ENCODE measurements at regions of chr14 and their contacts with region 1.

Region 1: GRCh38 chr14:51430633-51431032 is 190.6 kb downstream of the TMX1 start:
- DNase-seq: no peak
- H3K4me3 Mint-ChIP-seq: peak overlapping the region; percentile 29
- H3K27ac Mint-ChIP-seq: peak overlapping the region; percentile 75
- H3K4me1 Mint-ChIP-seq: peaks cover 22% of the 10 kb centered on the region
- H3K27me3 Mint-ChIP-seq: no peaks in the 10 kb centered on the region
- CTCF ChIP-seq: no peak

Region 2: DNA sequence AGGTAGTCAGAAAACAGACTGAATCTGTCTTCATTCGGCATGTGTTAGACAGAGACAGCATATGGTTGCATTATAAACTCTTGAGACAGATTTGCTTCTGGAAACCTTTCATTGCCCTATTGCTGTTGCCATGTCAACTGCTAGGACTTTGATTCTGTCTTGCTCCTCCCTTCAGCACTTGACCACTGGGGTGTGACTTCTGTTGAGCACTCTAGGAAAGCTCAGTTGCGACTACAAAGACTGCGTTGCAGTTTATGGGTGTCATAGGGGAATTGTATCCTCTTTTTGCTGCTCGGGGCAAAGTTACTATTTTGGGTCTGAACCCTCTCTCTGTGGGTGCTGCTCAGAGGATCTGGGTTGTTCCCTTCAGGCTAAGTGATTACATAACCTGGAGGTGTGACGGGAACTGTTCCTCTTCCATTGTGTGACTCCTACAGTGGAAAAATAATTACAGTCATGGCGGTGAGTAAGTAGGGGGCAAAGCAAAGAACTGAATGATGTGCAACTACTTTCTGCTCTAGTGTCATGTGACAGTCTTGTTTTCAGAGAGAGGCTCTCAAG is 291.4 kb before region 1 on chr14:
- CTCF ChIA-PET with region 1: no interaction called
- intact Hi-C with region 1: no loop called
- DNase-seq: peak; percentile 13
- H3K4me3 Mint-ChIP-seq: no peak overlapping the region
- H3K27ac Mint-ChIP-seq: no peak overlapping the region
- H3K4me1 Mint-ChIP-seq: no peaks in the 10 kb centered on the region
- H3K27me3 Mint-ChIP-seq: no peaks in the 10 kb centered on the region
- CTCF ChIP-seq: no peak

Region 3: DNA sequence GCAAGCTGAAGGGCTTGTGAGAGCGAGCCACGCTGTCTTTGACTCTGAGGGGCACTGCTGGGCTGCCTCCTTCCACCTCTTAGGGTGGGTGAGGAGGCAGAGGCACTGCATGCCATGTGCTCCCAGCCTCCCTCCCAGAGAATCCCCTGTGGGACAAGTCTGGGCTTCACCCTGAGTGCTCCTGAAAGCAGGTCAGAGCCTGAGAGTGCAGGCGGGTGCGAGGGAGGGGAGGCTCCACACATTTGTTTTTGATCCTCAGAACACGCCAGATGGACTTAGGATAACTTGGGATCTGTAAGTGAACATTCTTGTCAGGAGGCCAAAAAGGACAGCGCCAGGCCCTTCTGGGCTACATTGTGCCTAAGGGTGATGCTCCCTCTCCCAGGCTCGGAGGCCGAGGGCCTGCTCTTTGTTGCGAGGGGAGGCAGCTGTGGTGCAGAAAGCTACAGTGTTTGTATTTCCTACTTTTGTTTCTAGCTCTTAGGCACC is 35.2 kb before region 1 on chr14:
- CTCF ChIA-PET with region 1: no interaction called
- intact Hi-C with region 1: loop called (anchors 1 kb)
- DNase-seq: no peak
- H3K4me3 Mint-ChIP-seq: peak overlapping the region; percentile 33
- H3K27ac Mint-ChIP-seq: peak overlapping the region; percentile 95
- H3K4me1 Mint-ChIP-seq: peaks cover 48% of the 10 kb centered on the region
- H3K27me3 Mint-ChIP-seq: no peaks in the 10 kb centered on the region
- CTCF ChIP-seq: no peak

Region 4: GRCh38 chr14:51638071-51638944 is 207.7 kb after region 1 on chr14:
- CTCF ChIA-PET with region 1: no interaction called
- intact Hi-C with region 1: loop called (anchors 5 kb)
- DNase-seq: no peak
- H3K4me3 Mint-ChIP-seq: no peak overlapping the region
- H3K27ac Mint-ChIP-seq: no peak overlapping the region
- H3K4me1 Mint-ChIP-seq: peaks cover 8% of the 10 kb centered on the region
- H3K27me3 Mint-ChIP-seq: no peaks in the 10 kb centered on the region
- CTCF ChIP-seq: no peak

Region 5: DNA sequence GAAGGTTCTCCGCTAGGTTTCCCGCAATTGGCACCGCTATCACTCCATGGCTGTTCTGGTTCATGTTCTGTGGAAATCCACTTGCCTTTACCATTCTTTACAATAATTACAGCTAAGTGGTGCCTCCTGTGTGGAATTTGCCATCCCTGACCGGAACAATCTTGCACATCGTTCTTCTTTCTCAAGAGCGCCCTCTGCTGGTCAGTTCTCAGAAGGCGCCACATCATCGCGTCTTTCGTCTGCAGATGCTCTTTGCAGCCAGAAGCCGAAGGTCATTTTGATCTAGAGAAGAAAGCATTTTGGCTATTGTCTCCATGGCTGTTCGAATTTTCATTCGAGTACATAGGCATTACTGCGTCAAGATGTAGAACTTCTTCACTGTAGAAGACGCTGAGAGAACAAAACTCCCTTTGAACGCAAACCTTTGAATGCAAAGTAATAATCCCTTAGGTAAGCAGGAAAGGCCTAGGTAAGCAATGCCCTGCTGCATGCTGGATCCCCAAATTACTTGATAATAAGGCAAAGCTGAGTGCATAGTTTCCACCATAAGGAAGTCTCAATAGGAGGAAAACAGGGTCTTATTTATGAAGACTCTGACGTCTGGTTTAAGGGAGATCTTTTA is 548.6 kb after region 1 on chr14:
- CTCF ChIA-PET with region 1: no interaction called
- intact Hi-C with region 1: no loop called
- DNase-seq: peak; percentile 80
- H3K4me3 Mint-ChIP-seq: no peak overlapping the region
- H3K27ac Mint-ChIP-seq: no peak overlapping the region
- H3K4me1 Mint-ChIP-seq: no peaks in the 10 kb centered on the region
- H3K27me3 Mint-ChIP-seq: peaks cover 58% of the 10 kb centered on the region
- CTCF ChIP-seq: peak; percentile 82

Measured in Calu3 (cell line).